CD4-positive, alpha-beta memory T cell (primary cell): ENCODE measurements at regions of chr11 and their contacts with region 1.

Region 1: DNA sequence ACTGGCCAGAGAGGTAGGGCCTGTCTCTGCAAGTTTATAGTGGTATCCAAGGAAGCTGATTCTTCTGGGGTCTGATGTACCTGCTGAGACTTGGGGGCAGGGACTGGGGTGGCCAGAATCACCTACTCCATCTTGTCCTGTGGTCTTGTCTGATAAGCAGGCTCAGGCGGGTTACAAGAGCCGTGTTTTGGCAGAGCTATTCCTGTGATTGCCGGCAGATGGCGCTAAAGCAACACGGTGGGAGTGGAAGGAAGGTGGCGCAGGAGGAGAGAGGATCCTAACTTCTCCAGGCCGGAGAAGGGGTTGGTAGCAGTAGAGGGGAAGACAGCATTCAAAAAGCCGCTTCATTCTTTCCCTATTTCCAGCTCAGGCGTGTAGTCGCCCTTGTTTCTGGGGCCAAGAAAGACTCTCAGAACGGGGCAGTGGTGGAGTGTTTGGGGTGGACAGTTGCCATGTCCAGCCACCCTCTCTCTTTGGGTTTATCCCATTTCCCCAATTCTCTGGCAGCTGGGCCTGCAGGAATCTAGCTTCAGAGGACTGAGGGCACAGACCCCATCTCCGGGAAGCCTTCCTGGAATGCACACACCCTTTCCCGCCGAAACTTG is 15.1 kb downstream of the CHRM1 start:
- DNase-seq: peak; percentile 66 to 73 (median 71)
- H3K4me3 ChIP-seq: no peak overlapping the region
- H3K4me3 Mint-ChIP-seq: no peak overlapping the region
- H3K27ac ChIP-seq: no peak overlapping the region
- H3K27ac Mint-ChIP-seq: peak overlapping the region in 1 of 7 donors; percentile 53
- H3K4me1 ChIP-seq: no peaks in the 10 kb centered on the region
- H3K4me1 Mint-ChIP-seq: peaks cover 0 to 4% (median 2%) of the 10 kb centered on the region in 4 donors
- H3K27me3 ChIP-seq: no peaks in the 10 kb centered on the region
- H3K27me3 Mint-ChIP-seq: peaks cover 7 to 17% of the 10 kb centered on the region in 2 donors

Region 2: DNA sequence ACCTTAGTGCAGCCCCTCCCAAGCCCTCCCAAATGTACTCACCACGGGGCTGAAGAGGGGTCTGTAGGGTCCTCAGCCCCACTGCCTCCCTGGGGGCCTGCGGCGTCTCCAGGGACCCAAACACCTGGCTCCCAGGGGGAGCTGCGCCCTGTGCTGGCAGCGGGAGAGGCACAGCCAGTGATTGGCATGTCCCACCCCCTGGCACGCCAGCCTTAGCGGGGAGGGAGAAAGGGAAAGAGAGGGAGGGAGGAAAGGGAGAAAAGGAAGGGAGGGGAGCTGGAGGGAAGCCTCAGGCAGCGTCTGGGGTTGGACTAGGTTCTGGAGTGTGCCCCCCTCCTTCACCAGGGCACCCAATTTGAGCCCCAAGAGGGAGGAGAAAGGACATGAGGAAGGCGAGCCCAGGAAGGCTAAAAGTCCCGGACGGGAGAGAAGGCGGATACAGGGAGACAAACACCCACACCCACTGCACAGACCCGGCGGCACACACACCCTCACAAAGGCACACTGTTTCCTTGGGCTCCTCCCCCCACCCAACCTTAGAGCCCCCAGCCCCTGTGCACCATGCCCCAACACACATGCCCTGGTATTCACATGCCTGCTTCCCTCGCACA is 15.3 kb after region 1 on chr11 and contains the start of gene CHRM1:
- CTCF ChIA-PET with region 1: interaction called, 20 read pairs
- POLR2A ChIA-PET with region 1: no interaction called
- intact Hi-C with region 1: no loop called
- DNase-seq: no peak
- H3K4me3 ChIP-seq: no peak within 1 kb of the TSS
- H3K4me3 Mint-ChIP-seq: peak within 1 kb of the TSS in 3 of 8 donors; percentile 26 to 81 (median 35)
- H3K27ac ChIP-seq: no peak within 1 kb of the TSS
- H3K27ac Mint-ChIP-seq: peak within 1 kb of the TSS in 1 of 7 donors; percentile 84
- H3K4me1 ChIP-seq: peaks cover 26% of the 10 kb centered on the region
- H3K4me1 Mint-ChIP-seq: peaks cover 9 to 33% (median 19%) of the 10 kb centered on the region in 4 donors
- H3K27me3 ChIP-seq: peaks cover 14% of the 10 kb centered on the region
- H3K27me3 Mint-ChIP-seq: peaks cover 27 to 43% of the 10 kb centered on the region in 2 donors
- total RNA-seq, gene CHRM1: not detected

Region 3: DNA sequence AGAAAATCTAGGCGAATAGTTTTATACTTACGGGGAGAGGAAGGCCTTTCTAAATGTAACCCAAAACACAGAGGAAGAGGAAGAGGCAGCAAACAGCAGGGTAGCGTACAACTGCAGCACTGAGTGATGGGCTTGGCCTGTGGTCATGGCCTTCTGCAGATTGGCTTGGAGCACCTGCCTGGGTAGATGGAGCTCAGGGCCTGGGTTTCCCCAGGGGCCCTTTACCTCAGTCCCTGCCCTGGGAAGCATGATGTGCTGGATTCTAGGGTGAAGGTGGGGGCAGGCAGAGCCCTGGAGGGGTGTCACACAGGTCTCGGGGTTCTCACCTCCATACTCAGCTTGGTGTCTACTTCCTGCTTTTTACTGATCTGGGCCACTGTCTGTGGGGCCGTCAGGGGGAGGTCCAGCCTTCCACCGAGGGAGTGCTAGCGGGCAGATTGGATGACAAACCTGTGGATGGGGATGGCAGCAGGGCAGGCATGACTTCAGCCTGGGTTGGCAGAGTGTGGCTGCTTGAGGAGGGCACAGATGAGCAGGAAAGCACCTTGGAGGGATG is 42.8 kb after region 1 on chr11:
- CTCF ChIA-PET with region 1: interaction called, 10 read pairs
- POLR2A ChIA-PET with region 1: no interaction called
- intact Hi-C with region 1: no loop called
- DNase-seq: no peak
- H3K4me3 ChIP-seq: no peak overlapping the region
- H3K4me3 Mint-ChIP-seq: no peak overlapping the region
- H3K27ac ChIP-seq: no peak overlapping the region
- H3K27ac Mint-ChIP-seq: peak overlapping the region in 1 of 7 donors; percentile 34
- H3K4me1 ChIP-seq: no peaks in the 10 kb centered on the region
- H3K4me1 Mint-ChIP-seq: peaks cover 0 to 1% (median 0%) of the 10 kb centered on the region in 4 donors
- H3K27me3 ChIP-seq: no peaks in the 10 kb centered on the region
- H3K27me3 Mint-ChIP-seq: peaks cover 15 to 20% of the 10 kb centered on the region in 2 donors

Region 4: DNA sequence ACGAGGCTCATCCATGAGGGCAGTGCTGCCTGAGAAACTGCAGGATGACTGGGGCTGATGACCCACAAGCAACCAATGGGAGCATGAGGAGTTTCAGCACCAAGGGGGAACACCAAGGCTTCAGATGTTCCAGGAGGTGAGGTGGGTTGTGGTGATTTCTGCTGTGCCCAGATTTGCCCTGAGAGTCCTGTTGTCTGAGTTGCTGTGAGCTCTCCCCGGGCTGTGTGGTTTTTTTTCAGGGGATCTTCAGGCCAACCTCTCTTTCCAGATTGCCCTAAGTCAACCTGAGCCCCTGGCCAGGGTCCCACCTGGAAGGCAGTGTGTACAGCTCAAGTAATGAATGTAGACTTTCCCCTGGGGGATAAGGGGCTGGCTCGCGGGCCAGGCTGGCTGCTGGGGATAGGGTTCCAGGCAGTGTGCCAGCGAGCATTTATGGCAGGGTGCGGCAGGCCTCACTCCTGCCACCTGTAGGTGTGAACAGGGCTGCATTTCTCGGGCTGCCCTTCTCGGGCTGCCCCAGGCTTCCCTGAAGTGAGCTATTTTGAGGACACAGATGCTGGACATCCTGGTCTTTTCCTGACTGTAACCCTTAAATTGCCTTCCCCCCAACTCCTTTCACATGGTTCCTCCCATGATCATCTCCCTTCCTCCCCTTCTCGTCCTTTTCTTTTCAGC is 69.0 kb after region 1 on chr11:
- CTCF ChIA-PET with region 1: interaction called, 30 read pairs
- POLR2A ChIA-PET with region 1: no interaction called
- intact Hi-C with region 1: loop called (anchors 1 kb)
- DNase-seq: no peak
- H3K4me3 ChIP-seq: no peak overlapping the region
- H3K4me3 Mint-ChIP-seq: no peak overlapping the region
- H3K27ac ChIP-seq: no peak overlapping the region
- H3K27ac Mint-ChIP-seq: peak overlapping the region in 1 of 7 donors; percentile 54
- H3K4me1 ChIP-seq: no peaks in the 10 kb centered on the region
- H3K4me1 Mint-ChIP-seq: no peaks in the 10 kb centered on the region
- H3K27me3 ChIP-seq: no peaks in the 10 kb centered on the region
- H3K27me3 Mint-ChIP-seq: peaks cover 4 to 21% of the 10 kb centered on the region in 2 donors

Region 5: GRCh38 chr11:63023841-63024648 is 118.0 kb after region 1 on chr11:
- CTCF ChIA-PET with region 1: interaction called, 233 read pairs
- POLR2A ChIA-PET with region 1: no interaction called
- intact Hi-C with region 1: no loop called
- DNase-seq: peak; percentile 68 to 76 (median 72)
- H3K4me3 ChIP-seq: no peak overlapping the region
- H3K4me3 Mint-ChIP-seq: peak overlapping the region in 2 of 8 donors; percentile 1 to 20
- H3K27ac ChIP-seq: no peak overlapping the region
- H3K27ac Mint-ChIP-seq: no peak overlapping the region
- H3K4me1 ChIP-seq: no peaks in the 10 kb centered on the region
- H3K4me1 Mint-ChIP-seq: peaks cover 0 to 4% (median 2%) of the 10 kb centered on the region in 4 donors
- H3K27me3 ChIP-seq: no peaks in the 10 kb centered on the region
- H3K27me3 Mint-ChIP-seq: peaks cover 8 to 25% of the 10 kb centered on the region in 2 donors

Region 6: DNA sequence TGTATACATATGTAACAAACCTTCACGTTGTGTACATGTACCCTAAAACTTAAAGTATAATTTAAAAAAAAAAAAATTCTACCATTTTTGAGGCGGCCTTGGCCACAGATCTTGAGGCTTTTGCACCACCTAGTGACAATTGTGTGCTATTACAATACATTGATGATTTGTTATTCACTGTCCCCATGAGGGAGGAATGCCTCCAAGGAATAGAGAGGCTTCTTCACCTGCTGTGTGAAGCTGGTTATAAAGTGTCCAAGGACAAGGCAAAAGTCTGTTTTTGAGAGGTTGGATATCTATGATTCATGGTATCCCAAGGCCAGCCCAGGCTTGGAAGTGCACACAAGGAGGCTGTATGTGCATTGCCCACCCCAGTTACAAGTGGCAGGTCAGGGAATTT is 306.7 kb after region 1 on chr11:
- CTCF ChIA-PET with region 1: interaction called, 5 read pairs
- POLR2A ChIA-PET with region 1: no interaction called
- intact Hi-C with region 1: loop called (anchors 2 kb)
- DNase-seq: peak in 3 of 5 donors; percentile 29 to 38 (median 32)
- H3K4me3 ChIP-seq: no peak overlapping the region
- H3K4me3 Mint-ChIP-seq: no peak overlapping the region
- H3K27ac ChIP-seq: no peak overlapping the region
- H3K27ac Mint-ChIP-seq: no peak overlapping the region
- H3K4me1 ChIP-seq: no peaks in the 10 kb centered on the region
- H3K4me1 Mint-ChIP-seq: no peaks in the 10 kb centered on the region
- H3K27me3 ChIP-seq: no peaks in the 10 kb centered on the region
- H3K27me3 Mint-ChIP-seq: peaks cover 15 to 26% of the 10 kb centered on the region in 2 donors